H1 (cell line): ENCODE measurements at regions of chr11 and their contacts with region 1.

Region 1: DNA sequence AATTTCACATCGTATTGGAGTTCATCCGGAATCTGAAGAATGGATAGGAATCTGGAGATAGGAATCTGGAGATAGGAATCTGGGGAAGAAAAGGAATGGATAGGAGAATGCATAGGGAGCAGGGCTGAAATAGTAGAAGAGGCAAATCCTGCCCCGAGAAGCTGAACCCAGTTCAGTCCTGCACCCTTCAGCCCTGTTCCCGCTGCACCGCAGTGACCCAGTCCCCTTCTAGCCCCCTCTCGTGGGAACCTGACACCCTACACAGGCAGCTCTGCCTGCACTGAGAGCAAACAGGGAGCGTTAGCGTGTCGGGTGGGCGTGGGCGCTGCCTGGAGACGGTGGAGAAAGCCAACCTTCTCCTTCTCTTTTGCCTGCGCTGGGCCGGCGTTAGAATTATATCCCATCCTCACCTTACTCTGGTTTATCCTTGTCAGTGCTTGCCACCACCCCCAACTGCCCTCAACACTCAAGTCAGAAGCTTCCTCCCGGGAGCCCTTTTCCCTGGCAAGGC is 1.0 kb upstream of the CCKBR start:
- DNase-seq: no peak
- H3K4me3 ChIP-seq: peak overlapping the region; percentile 22 to 72 (median 46); a peak in 7 of 8 replicates
- H3K27ac ChIP-seq: no peak overlapping the region
- H3K4me1 ChIP-seq: peaks cover 0 to 18% (median 9%) of the 10 kb centered on the region in 4 experiments; a peak in 6 of 7 replicates
- H3K27me3 ChIP-seq: peaks cover 16 to 58% (median 38%) of the 10 kb centered on the region in 4 experiments
- CTCF ChIP-seq: peak; percentile 3 to 19 (median 17)
- EP300 ChIP-seq: no peak
- POLR2A ChIP-seq: no peak
- RAD21 ChIP-seq: no peak

Region 2: DNA sequence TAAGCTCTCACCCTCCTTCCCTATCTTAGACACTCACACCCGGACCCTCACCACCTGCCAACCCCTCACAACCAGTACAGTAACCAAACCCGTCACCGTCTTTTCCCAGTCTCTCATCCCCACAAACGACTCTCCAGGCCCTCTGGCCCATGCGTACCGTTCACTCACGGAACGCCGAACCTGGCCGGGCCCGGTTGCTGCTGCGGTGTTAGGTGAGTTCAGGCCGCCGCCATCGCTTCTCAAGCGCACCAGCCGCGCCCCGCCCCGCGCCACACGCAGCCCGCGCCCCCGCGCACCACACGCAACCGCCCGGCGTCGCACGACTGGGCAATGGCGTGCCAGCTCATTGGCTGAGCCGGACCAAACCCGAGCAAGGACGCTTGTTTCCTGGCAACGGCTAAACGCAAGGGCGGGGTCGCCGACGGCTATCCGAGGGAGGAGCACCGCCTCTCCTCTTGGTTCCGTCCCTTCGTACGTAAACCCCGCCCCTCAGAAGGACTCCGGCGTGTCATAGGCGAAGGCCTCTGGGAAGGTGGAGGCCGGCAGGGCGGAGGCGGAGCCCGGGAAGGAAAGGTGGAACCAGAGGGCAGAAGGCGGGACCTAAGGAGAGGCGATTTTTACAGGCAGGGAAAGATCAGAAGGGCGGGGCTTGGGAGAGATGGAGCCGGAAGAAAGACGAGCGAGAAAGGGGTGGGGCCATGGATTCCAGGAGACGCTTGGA is 24.1 kb before region 1 on chr11 and contains the start of gene FHIP1B:
- CTCF ChIA-PET with region 1: interaction called, 57 read pairs
- POLR2A ChIA-PET with region 1: interaction called, 3 read pairs
- DNase-seq: peak; percentile 97 to 100
- H3K4me3 ChIP-seq: peak within 1 kb of the TSS; percentile 88 to 98 (median 94)
- H3K27ac ChIP-seq: peak within 1 kb of the TSS; percentile 61
- H3K4me1 ChIP-seq: peaks cover 0 to 5% (median 2%) of the 10 kb centered on the region in 4 experiments; a peak in 2 of 7 replicates
- H3K27me3 ChIP-seq: 0 out of 7 replicates have a peak, but pooled peaks cover 0 to 2% (median 0%) of the 10 kb centered on the region in 4 experiments
- CTCF ChIP-seq: no peak
- EP300 ChIP-seq: no peak
- POLR2A ChIP-seq: no peak
- RAD21 ChIP-seq: no peak
- total RNA-seq, gene FHIP1B: 16.8 TPM in 2 replicates

Region 3: DNA sequence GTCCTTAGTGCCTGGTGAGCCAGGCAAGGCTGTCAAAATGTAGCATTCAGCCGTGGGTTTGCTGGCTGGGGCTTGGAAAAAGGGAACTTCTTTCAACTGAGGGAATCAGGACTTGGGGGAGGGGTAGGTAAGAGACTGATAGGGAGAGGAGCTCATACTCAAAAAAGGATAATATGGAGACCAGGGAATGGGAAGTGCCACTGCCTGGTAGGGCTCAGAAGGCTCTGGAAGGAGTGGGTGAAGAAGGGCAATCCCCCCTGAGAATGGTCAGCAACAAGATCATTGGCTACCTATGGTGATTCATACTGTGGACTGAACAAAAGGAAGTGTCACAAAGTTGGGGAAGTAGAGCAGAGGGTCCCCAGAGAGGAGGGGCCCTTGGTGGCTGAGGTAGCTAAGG is 17.8 kb before region 1 on chr11:
- CTCF ChIA-PET with region 1: interaction called, 57 read pairs
- POLR2A ChIA-PET with region 1: interaction called, 3 read pairs
- DNase-seq: no peak
- H3K4me3 ChIP-seq: no peak overlapping the region
- H3K27ac ChIP-seq: no peak overlapping the region
- H3K4me1 ChIP-seq: no peaks in the 10 kb centered on the region; a peak in 1 of 7 replicates
- H3K27me3 ChIP-seq: peaks cover 0 to 2% (median 1%) of the 10 kb centered on the region in 4 experiments; a peak in 1 of 7 replicates
- CTCF ChIP-seq: no peak
- EP300 ChIP-seq: no peak
- POLR2A ChIP-seq: no peak
- RAD21 ChIP-seq: no peak

Region 4: GRCh38 chr11:6269994-6270393 is 11.4 kb after region 1 on chr11:
- CTCF ChIA-PET with region 1: interaction called, 112 read pairs
- POLR2A ChIA-PET with region 1: interaction called, 5 read pairs
- DNase-seq: peak in 1 of 2 experiments; percentile 69
- H3K4me3 ChIP-seq: no peak overlapping the region
- H3K27ac ChIP-seq: no peak overlapping the region
- H3K4me1 ChIP-seq: peaks cover 0 to 4% (median 0%) of the 10 kb centered on the region in 4 experiments; a peak in 1 of 7 replicates
- H3K27me3 ChIP-seq: peaks cover 0 to 2% (median 0%) of the 10 kb centered on the region in 4 experiments; a peak in 1 of 7 replicates
- CTCF ChIP-seq: peak; percentile 63 to 88 (median 69)
- EP300 ChIP-seq: no peak
- POLR2A ChIP-seq: no peak
- RAD21 ChIP-seq: peak; percentile 50 to 63

Region 5: GRCh38 chr11:6285019-6285418 is 26.4 kb after region 1 on chr11:
- CTCF ChIA-PET with region 1: interaction called, 33 read pairs
- POLR2A ChIA-PET with region 1: interaction called, 5 read pairs
- DNase-seq: no peak
- H3K4me3 ChIP-seq: no peak overlapping the region
- H3K27ac ChIP-seq: no peak overlapping the region
- H3K4me1 ChIP-seq: peaks cover 0 to 2% (median 0%) of the 10 kb centered on the region in 4 experiments; a peak in 2 of 7 replicates
- H3K27me3 ChIP-seq: peaks cover 12 to 75% (median 45%) of the 10 kb centered on the region in 4 experiments
- CTCF ChIP-seq: no peak
- EP300 ChIP-seq: no peak
- POLR2A ChIP-seq: no peak
- RAD21 ChIP-seq: no peak

Region 6: GRCh38 chr11:6307876-6308275 is 49.2 kb after region 1 on chr11:
- CTCF ChIA-PET with region 1: interaction called, 166 read pairs
- POLR2A ChIA-PET with region 1: no interaction called
- DNase-seq: no peak
- H3K4me3 ChIP-seq: no peak overlapping the region
- H3K27ac ChIP-seq: no peak overlapping the region
- H3K4me1 ChIP-seq: peaks cover 0 to 7% (median 4%) of the 10 kb centered on the region in 4 experiments; a peak in 2 of 7 replicates
- H3K27me3 ChIP-seq: no peaks in the 10 kb centered on the region
- CTCF ChIP-seq: no peak
- EP300 ChIP-seq: no peak
- POLR2A ChIP-seq: no peak
- RAD21 ChIP-seq: no peak

Region 7: DNA sequence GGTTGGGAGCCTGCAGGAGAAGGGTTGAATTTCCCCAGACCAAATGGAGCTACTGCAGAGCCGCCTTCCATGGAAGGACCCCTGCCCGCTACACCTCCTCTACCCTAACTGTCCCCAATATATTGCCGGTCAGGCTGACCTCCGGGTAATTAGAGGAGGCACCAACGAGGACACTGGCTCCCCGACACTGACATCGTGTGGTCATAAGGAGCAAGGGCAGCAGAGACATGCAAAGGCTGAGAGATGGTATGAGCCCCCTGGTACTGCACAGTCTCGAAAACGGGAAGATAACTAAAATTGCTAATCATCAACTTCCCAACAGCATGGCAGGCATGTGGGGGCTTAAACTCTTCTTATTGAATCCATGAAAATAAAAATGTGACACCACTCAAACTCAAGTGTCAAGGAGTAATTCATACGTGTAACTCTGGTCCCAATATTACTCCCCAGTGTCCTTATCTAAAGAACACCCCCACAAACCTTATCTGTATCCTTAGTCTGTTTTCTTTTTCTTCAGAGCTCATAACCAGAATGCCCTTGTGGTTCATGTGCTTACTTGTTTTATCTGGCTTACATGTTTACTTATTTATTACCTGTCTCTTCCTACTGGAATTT is 57.3 kb after region 1 on chr11:
- CTCF ChIA-PET with region 1: interaction called, 124 read pairs
- POLR2A ChIA-PET with region 1: no interaction called
- DNase-seq: peak in 1 of 2 experiments; percentile 65
- H3K4me3 ChIP-seq: no peak overlapping the region
- H3K27ac ChIP-seq: no peak overlapping the region
- H3K4me1 ChIP-seq: peaks cover 2 to 24% (median 16%) of the 10 kb centered on the region in 4 experiments
- H3K27me3 ChIP-seq: peaks cover 0 to 3% (median 1%) of the 10 kb centered on the region in 4 experiments; a peak in 1 of 7 replicates
- CTCF ChIP-seq: peak; percentile 92 to 97 (median 96)
- EP300 ChIP-seq: no peak
- POLR2A ChIP-seq: no peak
- RAD21 ChIP-seq: peak; percentile 92 to 95